OCI-LY7 (cell line): ENCODE measurements at regions of chr20 and their contacts with region 1.

Region 1: GRCh38 chr20:53934421-53935343 is 135.7 kb downstream of the BCAS1 start:
- DNase-seq: peak; percentile 88
- H3K4me3 ChIP-seq: peak overlapping the region; percentile 51
- H3K27ac ChIP-seq: peak overlapping the region; percentile 94
- H3K4me1 ChIP-seq: peaks cover 81% of the 10 kb centered on the region
- CTCF ChIP-seq: no peak

Region 2: DNA sequence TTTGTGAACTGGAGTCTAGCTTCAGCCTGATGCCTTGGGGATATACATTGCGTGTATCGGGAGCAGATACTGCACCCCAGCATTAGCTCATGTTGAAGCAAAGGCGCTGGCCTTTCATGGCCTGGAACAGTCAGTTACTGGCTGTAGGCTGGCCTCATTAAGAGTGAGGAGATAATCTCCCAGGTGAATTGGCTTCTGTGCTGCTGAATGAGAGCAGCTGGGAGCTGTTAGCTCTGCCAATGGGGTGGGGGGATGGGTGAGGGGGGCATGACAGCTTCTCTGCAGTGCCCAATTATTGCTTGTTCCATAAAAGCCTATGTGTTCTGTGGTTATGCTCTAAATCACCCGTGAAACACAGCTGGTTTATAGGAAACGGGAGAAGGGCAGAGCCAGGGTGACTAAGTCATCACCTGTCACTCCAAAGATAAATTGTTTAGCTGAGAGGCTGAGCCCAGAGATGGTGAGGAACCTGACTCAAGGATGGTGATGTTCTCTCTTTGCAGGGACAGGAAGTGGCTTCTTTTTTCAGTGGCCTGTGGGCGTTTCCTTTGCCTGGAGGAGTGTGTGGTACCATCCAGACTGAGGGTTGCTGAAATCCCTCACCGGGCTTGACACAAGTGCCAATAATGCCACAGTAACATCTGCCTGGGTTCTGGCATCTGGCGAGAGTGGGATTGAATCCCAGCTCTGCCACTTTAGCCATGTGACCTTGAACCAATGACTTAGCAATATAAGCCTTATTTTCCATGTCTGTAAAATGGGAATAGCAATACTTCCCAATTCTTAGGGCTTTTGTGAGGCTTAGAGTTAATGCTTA is 35.1 kb before region 1 on chr20:
- CTCF ChIA-PET with region 1: no interaction called
- POLR2A ChIA-PET with region 1: interaction called, 30 read pairs
- intact Hi-C with region 1: no loop called
- DNase-seq: peak; percentile 93
- H3K4me3 ChIP-seq: peak overlapping the region; percentile 47
- H3K27ac ChIP-seq: peak overlapping the region; percentile 94
- H3K4me1 ChIP-seq: peaks cover 84% of the 10 kb centered on the region
- CTCF ChIP-seq: no peak

Region 3: DNA sequence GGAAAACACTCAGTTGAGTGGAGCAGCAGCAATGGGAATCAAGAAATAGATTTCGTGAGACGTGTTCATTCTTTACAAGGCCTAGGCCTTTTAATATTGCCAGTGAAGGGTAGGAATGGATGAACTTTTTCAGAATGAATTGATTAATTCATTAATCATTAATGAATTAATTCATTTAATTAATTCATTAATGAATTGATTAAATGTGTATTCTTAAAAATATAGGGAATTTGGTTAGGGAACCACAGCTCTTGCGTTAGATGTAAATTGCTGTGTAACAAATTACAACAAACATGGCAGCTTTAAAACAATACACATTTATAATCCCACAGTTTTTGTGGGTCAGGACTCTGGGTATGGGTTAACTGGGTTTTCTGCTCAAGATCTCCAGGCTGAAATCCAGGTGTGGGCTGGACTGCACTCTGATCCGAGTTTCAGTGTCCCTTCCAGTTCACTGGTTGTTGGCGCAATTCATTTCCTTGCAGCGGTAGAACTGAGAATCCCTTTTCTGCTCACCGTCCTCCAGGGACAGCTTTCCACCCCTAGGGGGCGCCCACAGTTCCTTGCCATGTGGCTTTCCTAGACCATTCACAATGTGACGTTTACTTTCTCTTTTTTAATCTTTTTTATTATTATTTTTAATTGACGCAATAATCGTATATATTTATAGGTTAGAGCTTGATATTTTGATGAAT is 168.5 kb after region 1 on chr20:
- CTCF ChIA-PET with region 1: no interaction called
- POLR2A ChIA-PET with region 1: no interaction called
- intact Hi-C with region 1: no loop called
- DNase-seq: peak; percentile 65
- H3K4me3 ChIP-seq: no peak overlapping the region
- H3K27ac ChIP-seq: no peak overlapping the region
- H3K4me1 ChIP-seq: no peaks in the 10 kb centered on the region
- CTCF ChIP-seq: peak; percentile 95

Region 4: GRCh38 chr20:54829235-54829634 is 894.6 kb after region 1 on chr20:
- CTCF ChIA-PET with region 1: no interaction called
- POLR2A ChIA-PET with region 1: no interaction called
- intact Hi-C with region 1: no loop called
- DNase-seq: no peak
- H3K4me3 ChIP-seq: no peak overlapping the region
- H3K27ac ChIP-seq: no peak overlapping the region
- H3K4me1 ChIP-seq: no peaks in the 10 kb centered on the region
- CTCF ChIP-seq: no peak